B cell (primary cell): ENCODE measurements at regions of chr2 and their contacts with region 1.

Region 1: DNA sequence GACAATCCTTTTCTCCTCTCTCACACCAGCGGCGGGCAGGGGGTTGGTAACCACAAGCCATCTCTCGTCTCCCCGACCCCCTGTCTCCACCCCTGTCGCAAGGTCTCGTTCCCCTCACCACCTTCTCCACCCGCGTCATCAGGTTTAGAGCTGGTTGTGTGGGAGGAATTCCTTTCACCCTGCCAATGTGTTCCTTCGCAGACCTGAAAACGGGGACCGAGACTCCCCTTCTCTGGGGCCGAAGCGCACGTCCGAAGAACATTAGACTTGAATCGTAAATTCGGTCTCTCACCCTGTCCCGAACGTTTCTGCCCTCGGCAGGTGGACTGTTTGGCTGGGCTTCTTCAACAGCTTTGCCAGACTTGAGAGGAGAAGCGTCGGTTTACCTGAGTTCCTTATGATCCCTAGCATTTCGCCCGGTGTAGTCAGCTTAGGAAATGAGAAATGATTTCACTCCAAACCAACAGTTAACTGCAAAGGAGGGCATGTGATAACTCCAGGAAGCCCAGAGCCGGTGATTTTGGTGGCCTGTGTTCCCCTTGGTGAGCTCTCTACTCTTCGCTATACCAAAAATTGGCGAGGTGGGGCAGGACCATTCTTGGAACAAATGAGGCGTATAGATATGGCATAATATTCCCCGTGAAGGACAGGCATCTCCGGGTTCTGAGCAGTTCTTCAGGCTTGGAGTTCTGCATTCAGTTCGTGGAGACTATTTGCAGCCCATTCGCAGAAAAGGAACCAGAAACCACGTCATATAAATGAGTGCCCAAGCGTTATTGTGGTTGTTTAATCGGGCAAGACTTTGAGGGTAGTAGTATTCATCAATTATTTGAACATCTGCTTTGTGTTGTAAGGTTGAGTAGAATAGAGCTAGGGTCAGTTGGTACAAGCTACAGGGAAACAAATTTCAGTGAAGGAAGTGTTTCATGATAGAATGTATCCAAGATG is 694 bp downstream of the CFAP36 start:
- DNase-seq: peak; percentile 57
- ATAC-seq: peak; percentile 13
- H3K4me3 ChIP-seq: peak overlapping the region; percentile 63 to 92 (median 87)
- H3K4me3 Mint-ChIP-seq: peak overlapping the region; percentile 86
- H3K27ac ChIP-seq: peak overlapping the region; percentile 79 to 93
- H3K27ac Mint-ChIP-seq: peak overlapping the region; percentile 96
- H3K4me1 ChIP-seq: peaks cover 9 to 12% of the 10 kb centered on the region in 2 donors
- H3K4me1 Mint-ChIP-seq: peaks cover 14% of the 10 kb centered on the region
- H3K27me3 ChIP-seq: no peaks in the 10 kb centered on the region
- H3K27me3 Mint-ChIP-seq: no peaks in the 10 kb centered on the region
- CTCF ChIP-seq: no peak

Region 2: DNA sequence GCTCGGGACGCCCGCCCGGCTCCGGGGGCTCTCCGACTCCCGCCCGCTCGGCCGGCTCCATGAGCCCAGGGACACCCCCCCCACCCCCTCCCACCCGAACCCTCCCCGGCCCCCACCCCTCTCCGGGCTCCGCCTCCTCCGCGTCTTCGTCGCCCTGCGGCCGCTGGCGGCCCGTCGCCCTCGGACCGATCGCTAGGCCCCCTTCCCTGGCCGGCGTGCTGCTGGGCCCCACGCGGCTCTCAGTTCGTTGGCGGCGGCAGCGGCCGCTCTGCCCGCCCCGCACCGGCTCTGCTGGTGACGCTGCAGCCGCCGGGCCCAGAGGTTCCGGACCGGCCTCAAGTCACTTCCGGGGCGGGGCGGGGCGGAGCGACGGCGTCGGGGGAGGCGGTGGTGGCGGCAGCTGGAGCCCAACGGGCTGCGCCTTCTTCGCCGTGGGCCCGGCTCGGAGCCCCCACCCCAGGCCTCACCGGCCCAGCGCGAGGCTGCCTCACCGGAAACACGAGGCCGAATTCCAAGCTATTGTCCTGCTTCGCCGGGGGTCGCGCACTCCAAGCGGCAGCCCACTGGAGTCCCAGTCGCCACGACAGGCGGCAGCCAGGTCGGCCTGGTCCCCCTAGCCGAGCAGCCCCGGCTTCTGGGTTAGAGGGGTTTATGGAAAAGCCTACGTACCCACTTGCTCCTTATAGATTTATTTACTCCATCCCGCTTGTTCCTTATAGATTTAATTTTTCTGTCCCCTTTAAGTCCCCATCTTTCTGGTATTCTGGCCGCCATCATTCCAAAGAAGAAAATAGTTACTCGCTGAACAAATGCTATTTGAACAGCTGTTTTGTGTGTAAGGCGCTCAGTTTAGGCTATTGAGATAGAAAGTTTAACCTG is 1549.2 kb before region 1 on chr2 and contains the start of gene PSME4:
- CTCF ChIA-PET with region 1: no interaction called
- POLR2A ChIA-PET with region 1: no interaction called
- intact Hi-C with region 1: loop called (anchors 10 kb)
- DNase-seq: peak; percentile 93
- ATAC-seq: peak; percentile 89
- H3K4me3 ChIP-seq: peak within 1 kb of the TSS; percentile 71 to 98 (median 95)
- H3K4me3 Mint-ChIP-seq: peak within 1 kb of the TSS; percentile 94
- H3K27ac ChIP-seq: peak within 1 kb of the TSS; percentile 71 to 89
- H3K27ac Mint-ChIP-seq: peak within 1 kb of the TSS; percentile 91
- H3K4me1 ChIP-seq: peaks cover 31 to 33% of the 10 kb centered on the region in 2 donors
- H3K4me1 Mint-ChIP-seq: peaks cover 47% of the 10 kb centered on the region
- H3K27me3 ChIP-seq: no peaks in the 10 kb centered on the region
- H3K27me3 Mint-ChIP-seq: no peaks in the 10 kb centered on the region
- CTCF ChIP-seq: no peak
- total RNA-seq, gene PSME4: 59.9 and 61.9 TPM in 2 replicates

Region 3: DNA sequence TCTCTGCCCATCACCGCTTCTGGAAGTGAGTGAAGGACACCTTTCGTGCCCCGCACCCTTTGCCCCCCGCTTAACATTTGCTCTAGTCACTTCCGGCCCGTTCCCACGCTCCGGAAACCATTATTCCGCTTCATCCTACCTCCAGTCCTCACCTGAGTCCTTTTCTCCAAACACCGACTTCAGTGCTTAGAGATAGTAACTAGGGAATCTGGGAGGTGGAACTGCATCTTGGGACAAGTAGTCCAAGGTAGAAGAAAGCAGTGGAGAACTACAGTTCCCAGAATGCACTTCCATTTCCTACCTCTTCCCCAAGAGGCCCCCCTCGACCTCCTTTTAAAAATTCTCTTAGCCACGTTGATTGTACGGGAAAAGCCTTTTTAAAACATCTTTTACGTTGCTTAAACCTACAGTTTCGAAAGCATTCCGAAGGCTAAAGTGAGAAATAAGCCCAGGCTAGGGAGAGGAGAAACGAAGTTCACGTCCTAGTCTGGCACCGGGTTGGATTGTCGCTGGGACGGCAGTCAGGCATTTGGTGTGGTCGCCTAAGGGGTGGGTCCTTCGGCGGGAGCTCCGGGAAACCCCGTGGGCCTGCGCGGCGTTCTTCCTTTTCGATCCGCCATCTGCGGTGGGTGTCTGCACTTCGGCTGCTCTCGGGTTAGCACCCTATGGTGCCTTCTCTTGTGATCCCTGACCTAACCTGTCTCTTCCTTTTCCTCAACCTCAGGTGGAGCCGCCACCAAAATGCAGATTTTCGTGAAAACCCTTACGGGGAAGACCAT is 287.9 kb before region 1 on chr2 and contains the starts of genes CLHC1 and RPS27A:
- CTCF ChIA-PET with region 1: no interaction called
- POLR2A ChIA-PET with region 1: no interaction called
- intact Hi-C with region 1: loop called (anchors 1 kb)
- DNase-seq: peak; percentile 97
- ATAC-seq: peak; percentile 87
- H3K4me3 ChIP-seq: peak within 1 kb of the TSS; percentile 72 to 98 (median 94)
- H3K4me3 Mint-ChIP-seq: peak within 1 kb of the TSS; percentile 94
- H3K27ac ChIP-seq: peak within 1 kb of the TSS; percentile 95 to 98
- H3K27ac Mint-ChIP-seq: peak within 1 kb of the TSS; percentile 99
- H3K4me1 ChIP-seq: peaks cover 28 to 39% of the 10 kb centered on the region in 2 donors
- H3K4me1 Mint-ChIP-seq: peaks cover 54% of the 10 kb centered on the region
- H3K27me3 ChIP-seq: no peaks in the 10 kb centered on the region
- H3K27me3 Mint-ChIP-seq: no peaks in the 10 kb centered on the region
- CTCF ChIP-seq: no peak
- total RNA-seq, gene CLHC1: 12.0 and 12.8 TPM in 2 replicates
- total RNA-seq, gene RPS27A: 1,561 and 1,678 TPM in 2 replicates

Region 4: DNA sequence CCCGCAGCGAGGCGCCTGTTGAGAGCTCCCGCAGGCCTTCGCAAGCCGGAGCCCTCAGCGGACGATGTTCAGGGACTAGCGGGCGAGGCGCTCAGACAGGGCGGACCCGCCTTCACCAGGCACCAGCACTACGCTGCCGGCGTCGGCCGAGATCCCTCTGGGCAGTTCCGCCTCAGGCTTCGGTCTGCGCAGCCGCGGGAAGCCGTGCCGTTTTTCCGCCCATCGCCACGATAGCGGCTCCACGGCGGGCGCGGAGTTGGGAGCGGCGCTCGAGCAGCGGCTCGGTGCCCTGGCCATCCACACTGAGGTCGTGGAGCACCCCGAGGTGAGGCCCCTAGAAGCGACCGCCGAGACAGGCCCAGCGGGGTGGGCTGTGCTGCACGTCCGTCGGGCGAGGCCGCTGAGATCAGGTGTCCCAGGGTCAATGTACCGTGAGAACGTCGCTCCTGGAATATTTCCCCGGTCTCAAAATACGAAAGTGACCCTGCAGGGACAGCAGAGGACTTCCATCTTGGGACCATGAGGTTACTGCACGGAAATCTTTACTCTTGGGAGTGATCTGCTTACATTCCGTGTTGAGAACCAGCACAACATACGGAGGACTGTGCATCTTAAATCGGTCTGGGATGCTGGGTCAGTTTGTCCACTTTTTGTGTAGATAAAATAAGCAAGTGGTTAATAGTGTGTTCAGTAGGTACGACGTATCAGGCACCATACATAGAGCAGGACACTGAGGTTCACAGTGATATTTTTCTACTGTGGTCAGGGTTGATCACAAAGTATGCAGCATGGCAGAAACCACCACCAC is 237.9 kb before region 1 on chr2:
- CTCF ChIA-PET with region 1: no interaction called
- POLR2A ChIA-PET with region 1: no interaction called
- intact Hi-C with region 1: loop called (anchors 2 kb)
- DNase-seq: peak; percentile 91
- ATAC-seq: peak; percentile 99
- H3K4me3 ChIP-seq: peak overlapping the region; percentile 76 to 92 (median 87)
- H3K4me3 Mint-ChIP-seq: peak overlapping the region; percentile 93
- H3K27ac ChIP-seq: peak overlapping the region; percentile 82 to 89
- H3K27ac Mint-ChIP-seq: peak overlapping the region; percentile 99
- H3K4me1 ChIP-seq: peaks cover 11 to 18% of the 10 kb centered on the region in 2 donors
- H3K4me1 Mint-ChIP-seq: peaks cover 24% of the 10 kb centered on the region
- H3K27me3 ChIP-seq: no peaks in the 10 kb centered on the region
- H3K27me3 Mint-ChIP-seq: no peaks in the 10 kb centered on the region
- CTCF ChIP-seq: no peak

Region 5: GRCh38 chr2:55617175-55618024 is 97.2 kb after region 1 on chr2 and contains the start of gene PPP4R3B:
- CTCF ChIA-PET with region 1: no interaction called
- POLR2A ChIA-PET with region 1: interaction called, 12 read pairs
- intact Hi-C with region 1: loop called (anchors 1 kb)
- DNase-seq: peak; percentile 99
- ATAC-seq: peak; percentile 84
- H3K4me3 ChIP-seq: peak within 1 kb of the TSS; percentile 94 to 99 (median 96)
- H3K4me3 Mint-ChIP-seq: no peak within 1 kb of the TSS
- H3K27ac ChIP-seq: peak within 1 kb of the TSS; percentile 96 to 98
- H3K27ac Mint-ChIP-seq: no peak within 1 kb of the TSS
- H3K4me1 ChIP-seq: peaks cover 42 to 46% of the 10 kb centered on the region in 2 donors
- H3K4me1 Mint-ChIP-seq: peaks cover 47% of the 10 kb centered on the region
- H3K27me3 ChIP-seq: no peaks in the 10 kb centered on the region
- H3K27me3 Mint-ChIP-seq: no peaks in the 10 kb centered on the region
- CTCF ChIP-seq: peak; percentile 36
- total RNA-seq, gene PPP4R3B: 89.1 and 93.8 TPM in 2 replicates

Region 6: GRCh38 chr2:55804535-55804934 is 284.3 kb after region 1 on chr2:
- CTCF ChIA-PET with region 1: no interaction called
- POLR2A ChIA-PET with region 1: no interaction called
- intact Hi-C with region 1: no loop called
- DNase-seq: no peak
- ATAC-seq: no peak
- H3K4me3 ChIP-seq: no peak overlapping the region
- H3K4me3 Mint-ChIP-seq: no peak overlapping the region
- H3K27ac ChIP-seq: no peak overlapping the region
- H3K27ac Mint-ChIP-seq: no peak overlapping the region
- H3K4me1 ChIP-seq: no peaks in the 10 kb centered on the region
- H3K4me1 Mint-ChIP-seq: no peaks in the 10 kb centered on the region
- H3K27me3 ChIP-seq: no peaks in the 10 kb centered on the region
- H3K27me3 Mint-ChIP-seq: peaks cover 7% of the 10 kb centered on the region
- CTCF ChIP-seq: no peak